ENCODE measurements at regions of chr4 and their contacts with region 1.

Region 1: GRCh38 chr4:168480931-168481611 is 779 bp upstream of the DDX60L start:
- DNase-seq: peak; percentile 47
- H3K4me3 Mint-ChIP-seq: peak overlapping the region; percentile 89
- H3K27ac Mint-ChIP-seq: peak overlapping the region; percentile 98
- H3K4me1 Mint-ChIP-seq: peaks cover 58% of the 10 kb centered on the region
- H3K27me3 Mint-ChIP-seq: peaks cover 2% of the 10 kb centered on the region

Region 2: DNA sequence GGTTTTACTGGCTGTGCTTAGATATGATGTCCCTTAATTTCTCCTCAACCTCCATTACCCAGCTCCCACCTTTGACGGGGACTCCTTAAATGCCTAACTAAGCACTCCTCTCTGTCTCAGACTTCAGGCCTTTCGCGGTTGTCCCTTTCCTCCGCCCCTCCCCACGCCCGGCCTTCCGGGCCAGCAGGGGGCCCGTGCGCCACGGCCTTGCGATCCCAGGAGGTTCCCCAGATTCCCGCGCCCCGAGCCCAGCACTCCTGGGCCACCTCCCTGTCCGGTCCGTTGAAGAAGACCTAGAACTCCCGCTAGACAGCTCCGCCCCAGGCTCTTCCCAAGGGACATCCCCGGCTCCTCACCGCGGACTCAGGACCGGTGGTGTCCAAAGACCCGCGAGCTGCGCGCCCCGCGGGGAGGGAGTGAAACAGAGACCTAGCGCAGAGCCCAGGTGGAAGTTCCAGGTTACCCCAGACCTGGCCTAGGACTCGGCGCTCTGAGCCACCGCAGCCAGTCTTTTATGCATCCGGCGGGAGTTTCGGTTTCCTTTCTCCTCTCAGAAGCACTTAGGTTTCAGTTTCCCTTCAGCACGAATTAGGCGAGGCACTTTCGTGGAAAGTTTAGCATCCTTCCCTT is 162.7 kb before region 1 on chr4 and contains the start of gene DDX60:
- intact Hi-C with region 1: loop called (anchors 1 kb)
- DNase-seq: peak; percentile 85
- H3K4me3 Mint-ChIP-seq: peak within 1 kb of the TSS; percentile 90
- H3K27ac Mint-ChIP-seq: peak within 1 kb of the TSS; percentile 88
- H3K4me1 Mint-ChIP-seq: peaks cover 60% of the 10 kb centered on the region
- H3K27me3 Mint-ChIP-seq: peaks cover 1% of the 10 kb centered on the region
- total RNA-seq, gene DDX60: 10.6 and 15.2 TPM in 2 replicates

Region 3: DNA sequence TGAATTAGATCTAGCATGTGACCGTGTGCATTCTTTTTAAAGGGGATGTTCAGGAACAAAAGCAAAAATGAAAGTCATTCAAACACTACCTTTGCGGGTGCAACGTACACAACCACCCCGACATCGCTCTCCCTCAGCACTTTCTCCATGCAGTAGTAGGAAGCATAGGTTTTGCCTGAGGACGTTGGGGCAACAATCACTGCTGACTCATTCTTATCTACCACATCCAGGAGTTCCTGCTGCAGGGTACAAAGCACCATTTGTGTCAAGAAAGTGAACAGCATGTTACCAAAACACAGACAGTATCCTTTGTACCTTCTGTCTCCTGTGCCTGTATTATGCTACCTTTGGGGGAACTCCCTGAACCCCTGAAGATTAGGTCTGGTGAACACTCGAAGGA is 59.4 kb before region 1 on chr4:
- intact Hi-C with region 1: loop called (anchors 5 kb)
- DNase-seq: peak; percentile 5
- H3K4me3 Mint-ChIP-seq: no peak overlapping the region
- H3K27ac Mint-ChIP-seq: no peak overlapping the region
- H3K4me1 Mint-ChIP-seq: peaks cover 10% of the 10 kb centered on the region
- H3K27me3 Mint-ChIP-seq: no peaks in the 10 kb centered on the region

Region 4: DNA sequence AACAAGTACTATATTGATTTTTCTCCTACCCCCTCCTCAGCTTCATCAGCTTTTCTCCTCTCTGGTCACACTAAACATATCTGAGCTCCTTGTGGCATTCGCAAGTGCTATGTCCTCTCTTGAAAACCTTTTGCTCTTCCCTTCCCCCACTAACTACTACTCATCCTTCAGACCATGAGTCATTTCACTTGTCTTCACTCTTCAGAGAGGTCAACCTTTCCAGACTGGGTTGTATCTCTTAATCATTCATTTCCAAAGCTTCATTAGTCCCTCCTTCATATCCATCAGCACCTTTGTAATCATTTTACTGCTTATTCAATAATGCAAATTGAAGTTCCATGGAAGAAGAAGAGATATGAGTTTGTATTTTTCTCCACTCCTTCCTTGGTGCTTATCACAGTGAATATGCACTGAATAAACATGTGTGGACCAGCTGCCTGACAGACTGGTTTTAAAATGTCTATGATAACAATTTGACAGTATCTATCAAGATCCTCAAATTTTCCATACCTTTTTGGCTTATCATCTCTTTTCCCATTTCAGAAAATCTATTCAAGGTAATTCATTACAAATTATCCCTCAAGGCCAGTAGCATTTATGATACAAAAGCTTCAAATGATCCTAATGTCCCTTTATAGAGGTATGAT is 29.2 kb before region 1 on chr4:
- intact Hi-C with region 1: loop called (anchors 2 kb)
- DNase-seq: no peak
- H3K4me3 Mint-ChIP-seq: no peak overlapping the region
- H3K27ac Mint-ChIP-seq: peak overlapping the region; percentile 50
- H3K4me1 Mint-ChIP-seq: peaks cover 23% of the 10 kb centered on the region
- H3K27me3 Mint-ChIP-seq: no peaks in the 10 kb centered on the region

Region 5: GRCh38 chr4:168461821-168462220 is 19.2 kb before region 1 on chr4:
- intact Hi-C with region 1: loop called (anchors 2 kb)
- DNase-seq: no peak
- H3K4me3 Mint-ChIP-seq: no peak overlapping the region
- H3K27ac Mint-ChIP-seq: no peak overlapping the region
- H3K4me1 Mint-ChIP-seq: no peaks in the 10 kb centered on the region
- H3K27me3 Mint-ChIP-seq: no peaks in the 10 kb centered on the region

Region 6: DNA sequence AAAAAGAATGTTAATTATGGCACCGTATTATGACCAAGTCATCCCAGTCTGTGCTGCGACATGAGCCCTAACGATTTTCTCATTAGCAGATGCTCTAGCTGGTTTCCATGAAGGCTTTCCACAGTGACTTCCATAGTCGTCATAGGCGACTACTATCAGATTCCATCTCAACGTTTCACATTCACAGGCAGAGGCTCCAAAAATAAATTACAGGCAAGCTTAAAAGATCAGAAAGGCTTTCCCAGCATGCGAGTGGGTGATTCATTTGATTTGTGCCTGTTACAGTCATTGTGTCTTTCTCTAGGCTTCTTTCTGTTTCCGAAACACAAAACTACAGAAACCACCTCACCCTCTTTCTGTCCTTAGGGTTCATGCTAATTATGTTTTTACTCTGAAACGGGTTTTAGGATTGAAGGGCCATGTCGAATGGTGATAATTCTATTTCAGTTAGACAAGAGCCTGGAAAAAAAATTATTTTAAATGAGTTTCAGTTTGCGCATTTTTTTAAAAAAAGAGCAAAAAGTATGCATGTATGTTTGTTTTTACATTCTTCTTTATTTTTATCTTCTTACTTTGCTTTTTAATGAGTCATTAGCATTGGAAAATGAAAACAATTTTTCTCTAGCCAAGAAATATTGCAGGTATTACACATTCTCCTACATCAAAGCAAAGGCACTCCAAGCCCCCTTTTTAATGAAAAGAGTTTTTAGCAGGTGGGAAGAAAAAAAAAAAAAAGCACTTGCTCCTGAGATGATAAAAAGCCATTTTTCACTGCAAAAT is 59.2 kb after region 1 on chr4:
- intact Hi-C with region 1: loop called (anchors 1 kb)
- DNase-seq: no peak
- H3K4me3 Mint-ChIP-seq: no peak overlapping the region
- H3K27ac Mint-ChIP-seq: no peak overlapping the region
- H3K4me1 Mint-ChIP-seq: peaks cover 5% of the 10 kb centered on the region
- H3K27me3 Mint-ChIP-seq: peaks cover 3% of the 10 kb centered on the region

Measured in activated T-helper 1 cell treated with anti-CD3 and anti-CD28 coated beads, Interleukin-12 subunit alpha, Interleukin-12 subunit beta, Interleukin-2, Interleukin-4 antibody, amounts not matched to agents 30 ng/mL and 10 ng/mL and 1 ng/mL, durations not matched to agents 14 hours and 24 hours and 36 hours (primary cell).